Activated CD4-positive, alpha-beta memory T cell treated with anti-CD3 and anti-CD28 coated beads for 36 hours (primary cell): ENCODE measurements at regions of chr3 and their contacts with region 1.

Region 1: DNA sequence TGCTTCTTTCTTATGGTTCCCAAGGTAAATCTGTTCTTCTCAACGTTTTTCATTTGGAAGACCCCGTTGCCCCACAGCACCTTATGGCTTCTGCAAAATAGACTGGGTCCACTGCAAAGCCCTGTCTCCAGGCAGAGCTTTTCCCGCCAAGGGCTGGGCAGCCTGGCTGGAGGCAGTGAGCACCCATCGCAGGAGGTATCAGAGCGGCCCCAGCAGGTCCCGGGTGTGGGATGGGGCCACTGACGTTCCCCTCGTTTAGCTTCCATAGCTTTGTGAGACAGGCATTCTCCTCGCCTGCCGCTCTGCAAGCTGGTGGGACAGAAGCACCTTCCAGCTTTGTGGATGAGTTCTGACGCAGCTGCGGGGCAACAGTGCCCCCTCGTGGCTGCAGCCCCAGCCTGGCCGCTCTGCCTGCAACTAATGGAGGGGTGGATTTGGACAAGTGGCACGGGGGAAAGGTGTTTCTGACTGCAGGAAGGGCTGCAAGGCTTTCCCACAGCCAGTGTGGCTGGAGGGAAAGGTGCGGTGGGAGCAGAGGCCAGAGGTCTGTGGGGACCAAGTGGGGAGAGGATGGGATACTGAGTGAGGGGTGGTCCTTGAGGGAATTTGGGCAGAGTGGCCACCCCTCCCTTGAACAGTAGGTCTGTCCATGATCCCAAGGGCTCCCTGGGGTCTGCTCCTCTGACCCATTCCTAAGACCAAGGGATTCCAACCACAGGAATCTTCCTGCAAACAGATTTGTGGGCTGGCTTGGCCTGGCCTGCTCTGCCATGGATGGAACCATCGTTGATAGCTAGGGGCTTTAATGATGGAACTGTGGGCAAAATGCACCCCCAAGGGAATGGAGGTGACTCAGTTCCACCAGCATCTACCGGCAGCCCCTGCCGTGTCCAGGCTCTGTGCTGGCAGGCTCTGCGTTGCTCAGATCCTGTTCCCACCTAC is 99.4 kb downstream of the FBLN2 start:
- DNase-seq: peak; percentile 84
- H3K4me3 Mint-ChIP-seq: peak overlapping the region; percentile 18
- H3K27ac Mint-ChIP-seq: peak overlapping the region; percentile 14
- H3K4me1 Mint-ChIP-seq: peaks cover 23% of the 10 kb centered on the region
- H3K27me3 Mint-ChIP-seq: peaks cover 8% of the 10 kb centered on the region

Region 2: DNA sequence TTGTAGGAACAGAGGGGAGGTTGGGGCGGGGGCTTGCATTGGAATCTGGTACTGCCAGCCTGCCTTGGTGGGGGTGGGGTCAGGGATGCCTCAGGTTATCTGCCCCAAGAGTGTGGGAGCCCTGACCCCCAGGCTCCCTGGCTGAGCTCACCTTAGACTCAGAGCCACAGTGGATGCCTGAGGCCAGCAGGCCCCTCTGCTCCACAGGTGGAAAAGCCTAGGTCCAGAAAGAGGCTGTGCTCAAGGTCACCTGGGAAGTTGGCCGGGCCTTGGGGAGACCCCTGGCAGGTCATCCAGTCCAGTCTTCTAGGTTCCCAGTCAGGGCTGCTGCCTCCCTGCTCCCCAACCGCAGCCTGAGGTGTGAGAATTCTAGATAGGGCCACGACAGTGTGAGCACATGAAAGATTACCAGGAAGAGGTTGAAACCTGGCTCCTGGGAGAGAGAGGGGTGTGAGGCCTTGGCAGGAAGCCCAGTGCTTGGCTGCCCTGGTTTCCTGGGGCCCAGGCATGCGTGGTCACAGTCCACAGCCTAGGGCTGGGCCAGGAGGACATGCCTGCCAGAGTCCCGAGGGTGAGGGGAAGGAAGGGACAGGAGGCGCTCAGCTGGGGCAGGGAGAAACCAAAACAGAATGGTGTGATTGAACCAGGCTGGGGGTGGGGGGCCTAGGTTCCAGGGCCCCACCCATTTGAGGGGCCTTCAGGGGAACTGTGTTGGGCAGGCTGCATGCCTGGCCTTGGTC is 163.3 kb before region 1 on chr3:
- CTCF ChIA-PET with region 1: interaction called, 38 read pairs
- POLR2A ChIA-PET with region 1: no interaction called
- intact Hi-C with region 1: no loop called
- DNase-seq: peak; percentile 40
- H3K4me3 Mint-ChIP-seq: no peak overlapping the region
- H3K27ac Mint-ChIP-seq: peak overlapping the region; percentile 13
- H3K4me1 Mint-ChIP-seq: peaks cover 19% of the 10 kb centered on the region
- H3K27me3 Mint-ChIP-seq: no peaks in the 10 kb centered on the region

Region 3: DNA sequence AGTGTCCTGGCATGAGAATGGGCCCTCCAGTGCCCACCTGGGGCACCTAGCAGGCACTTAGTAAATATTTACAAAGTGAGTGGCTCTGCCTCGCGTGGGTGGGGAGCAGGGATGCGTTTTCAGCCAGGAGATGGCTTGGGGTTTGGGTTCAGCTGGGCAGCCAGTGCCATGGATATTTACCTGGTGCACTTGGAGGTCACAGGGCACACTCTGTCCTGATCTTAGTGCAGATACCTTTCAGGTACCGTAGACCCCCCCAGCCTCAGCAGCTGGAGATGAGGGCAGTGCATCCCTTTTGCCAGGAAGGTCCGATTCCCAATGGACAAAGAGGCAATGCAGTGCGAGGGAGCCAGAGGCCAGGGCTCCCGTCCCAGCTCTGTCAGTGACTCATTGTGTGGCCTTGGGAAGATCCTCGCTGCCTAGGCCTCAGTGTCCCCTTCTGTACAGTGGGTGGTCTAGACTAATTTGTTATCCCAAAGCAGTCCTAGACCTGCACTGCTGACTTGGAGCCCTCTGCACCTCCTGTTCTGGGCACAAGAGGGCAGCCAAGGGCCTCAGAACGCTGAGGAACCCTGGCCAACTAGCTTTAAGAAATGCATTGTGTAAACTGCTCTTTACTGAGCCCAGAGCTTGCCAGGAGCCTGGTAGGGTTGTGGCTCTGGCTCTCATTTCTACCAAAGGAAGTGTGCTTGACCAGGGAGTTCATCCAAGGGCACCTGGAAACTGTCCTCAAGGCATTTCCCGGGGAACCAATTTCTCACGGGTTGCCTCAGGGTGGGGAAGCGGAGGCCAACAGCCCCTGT is 152.2 kb before region 1 on chr3:
- CTCF ChIA-PET with region 1: interaction called, 456 read pairs
- POLR2A ChIA-PET with region 1: no interaction called
- intact Hi-C with region 1: loop called (anchors 1 kb)
- DNase-seq: peak; percentile 82
- H3K4me3 Mint-ChIP-seq: no peak overlapping the region
- H3K27ac Mint-ChIP-seq: no peak overlapping the region
- H3K4me1 Mint-ChIP-seq: no peaks in the 10 kb centered on the region
- H3K27me3 Mint-ChIP-seq: no peaks in the 10 kb centered on the region

Region 4: GRCh38 chr3:13507769-13508339 is 140.5 kb before region 1 on chr3:
- CTCF ChIA-PET with region 1: interaction called, 15 read pairs
- POLR2A ChIA-PET with region 1: no interaction called
- intact Hi-C with region 1: no loop called
- DNase-seq: no peak
- H3K4me3 Mint-ChIP-seq: no peak overlapping the region
- H3K27ac Mint-ChIP-seq: no peak overlapping the region
- H3K4me1 Mint-ChIP-seq: no peaks in the 10 kb centered on the region
- H3K27me3 Mint-ChIP-seq: no peaks in the 10 kb centered on the region

Region 5: GRCh38 chr3:13637311-13637891 is 10.9 kb before region 1 on chr3:
- CTCF ChIA-PET with region 1: interaction called, 11 read pairs
- POLR2A ChIA-PET with region 1: no interaction called
- intact Hi-C with region 1: no loop called
- DNase-seq: no peak
- H3K4me3 Mint-ChIP-seq: no peak overlapping the region
- H3K27ac Mint-ChIP-seq: no peak overlapping the region
- H3K4me1 Mint-ChIP-seq: no peaks in the 10 kb centered on the region
- H3K27me3 Mint-ChIP-seq: no peaks in the 10 kb centered on the region